H1 (cell line): ENCODE measurements at regions of chr3 and their contacts with region 1.

Region 1: GRCh38 chr3:47273564-47273963 is 9.0 kb downstream of the KIF9 start:
- DNase-seq: peak in 1 of 2 experiments; percentile 52
- H3K4me3 ChIP-seq: no peak overlapping the region
- H3K27ac ChIP-seq: no peak overlapping the region
- H3K4me1 ChIP-seq: no peaks in the 10 kb centered on the region
- H3K27me3 ChIP-seq: no peaks in the 10 kb centered on the region
- CTCF ChIP-seq: peak in 2 of 3 experiments; percentile 41 to 46; a peak in 2 of 4 replicates
- EP300 ChIP-seq: no peak
- POLR2A ChIP-seq: no peak
- RAD21 ChIP-seq: 0 out of 4 replicates have a peak, but pooled peaks of 1 of the 2 experiments have one; percentile 9

Region 2: DNA sequence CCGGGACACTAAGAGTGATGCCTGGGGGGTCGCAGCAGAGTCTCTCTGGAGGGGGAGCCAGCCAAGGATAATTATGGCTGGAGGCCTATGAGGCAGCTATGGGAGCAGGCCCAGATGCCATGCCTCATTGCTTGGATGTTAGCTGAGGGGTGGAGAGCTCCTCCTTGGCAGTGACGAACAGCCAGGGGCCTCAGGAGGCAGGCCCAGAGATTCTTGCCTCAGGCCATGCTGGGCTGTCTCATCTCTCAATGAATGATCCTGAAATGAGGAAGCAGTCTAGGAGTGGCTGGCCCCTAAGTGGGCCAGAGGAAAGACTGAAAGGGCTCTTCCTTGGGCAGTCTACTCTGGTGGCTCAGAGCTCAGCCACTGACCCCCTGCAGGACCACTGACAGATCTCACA is 12.3 kb before region 1 on chr3:
- CTCF ChIA-PET with region 1: interaction called, 13 read pairs
- POLR2A ChIA-PET with region 1: interaction called, 3 read pairs
- DNase-seq: no peak
- H3K4me3 ChIP-seq: no peak overlapping the region
- H3K27ac ChIP-seq: no peak overlapping the region
- H3K4me1 ChIP-seq: peaks cover 0 to 12% (median 5%) of the 10 kb centered on the region in 4 experiments; a peak in 6 of 7 replicates
- H3K27me3 ChIP-seq: no peaks in the 10 kb centered on the region; a peak in 1 of 7 replicates
- CTCF ChIP-seq: no peak
- EP300 ChIP-seq: no peak
- POLR2A ChIP-seq: no peak
- RAD21 ChIP-seq: no peak

Region 3: DNA sequence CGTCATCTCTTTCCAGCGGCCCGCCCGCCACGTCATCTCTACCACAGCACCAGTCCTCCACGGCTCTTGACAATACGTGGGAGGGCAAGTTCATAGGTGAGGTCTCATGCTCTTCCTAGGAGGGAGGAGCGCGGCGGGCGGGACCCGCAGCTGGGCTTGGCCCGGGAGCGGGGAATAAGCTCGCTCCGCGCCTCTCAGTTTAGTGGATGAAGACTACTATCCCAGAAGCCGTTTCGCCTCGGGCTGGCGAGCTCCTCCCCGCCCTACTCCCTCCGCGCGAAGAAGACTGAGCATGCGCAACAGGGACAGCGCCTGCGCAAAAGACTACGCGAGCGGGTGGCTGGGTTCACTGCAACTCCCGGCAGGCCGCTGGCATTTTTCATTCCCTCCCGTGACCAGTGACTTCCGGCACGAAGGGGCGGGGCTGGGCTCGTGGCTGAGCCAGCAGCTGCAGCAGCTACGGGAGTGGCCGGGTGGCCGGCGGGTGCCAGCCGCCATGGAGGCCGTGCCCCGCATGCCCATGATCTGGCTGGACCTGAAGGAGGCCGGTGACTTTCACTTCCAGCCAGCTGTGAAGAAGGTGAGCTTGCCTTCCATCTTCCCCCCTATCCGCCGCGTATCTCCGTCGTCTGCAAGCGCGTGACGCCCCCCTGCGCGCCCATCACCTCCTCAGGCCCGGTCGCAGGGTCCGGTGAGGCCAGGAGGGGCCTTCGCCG is 107.2 kb after region 1 on chr3 and contains the start of gene PTPN23:
- CTCF ChIA-PET with region 1: no interaction called
- POLR2A ChIA-PET with region 1: no interaction called
- DNase-seq: peak; percentile 96 to 98
- H3K4me3 ChIP-seq: peak within 1 kb of the TSS; percentile 81 to 94 (median 88)
- H3K27ac ChIP-seq: peak within 1 kb of the TSS; percentile 81
- H3K4me1 ChIP-seq: peaks cover 3 to 5% (median 3%) of the 10 kb centered on the region in 4 experiments; a peak in 6 of 7 replicates
- H3K27me3 ChIP-seq: no peaks in the 10 kb centered on the region
- CTCF ChIP-seq: no peak
- EP300 ChIP-seq: no peak
- POLR2A ChIP-seq: peak; percentile 83 to 95
- RAD21 ChIP-seq: no peak
- total RNA-seq, gene PTPN23: 44.1 and 46.7 TPM in 2 replicates